ENCODE measurements at regions of chr7 and their contacts with region 1.

Region 1: GRCh38 chr7:17301471-17302456 is 3.3 kb downstream of the AHR start:
- DNase-seq: no peak
- CTCF ChIP-seq: no peak

Region 2: DNA sequence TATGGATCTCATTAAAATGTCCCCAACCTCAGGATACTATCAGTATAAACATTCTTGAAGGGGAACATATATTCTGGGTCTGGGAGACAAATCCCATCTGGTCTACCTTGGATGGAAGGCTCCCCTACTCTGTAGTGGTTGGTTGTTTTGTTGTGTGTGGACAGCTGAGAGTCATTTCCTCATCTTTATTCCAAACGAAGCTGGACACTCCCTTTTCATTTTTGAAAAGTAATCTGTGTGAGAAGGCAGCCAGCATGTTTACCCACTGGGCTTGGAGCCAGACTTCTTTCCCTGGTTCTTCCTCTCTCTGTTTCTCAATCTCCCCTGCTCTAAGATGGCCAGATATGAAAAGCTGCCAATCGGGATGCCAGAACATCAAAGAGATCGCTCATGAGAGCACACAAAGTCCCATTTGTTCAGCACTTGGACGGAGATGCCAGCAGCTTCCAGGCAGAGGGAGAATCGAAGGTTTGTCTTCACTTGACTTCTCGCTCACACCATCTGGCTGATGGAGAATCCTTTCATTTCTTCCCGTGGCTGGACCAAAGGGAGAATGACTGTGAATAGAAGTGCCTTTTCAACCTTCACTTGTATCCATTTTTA is 311.9 kb before region 1 on chr7:
- in situ Hi-C with region 1: loop called (anchors 5 kb)
- DNase-seq: no peak
- CTCF ChIP-seq: no peak

Region 3: DNA sequence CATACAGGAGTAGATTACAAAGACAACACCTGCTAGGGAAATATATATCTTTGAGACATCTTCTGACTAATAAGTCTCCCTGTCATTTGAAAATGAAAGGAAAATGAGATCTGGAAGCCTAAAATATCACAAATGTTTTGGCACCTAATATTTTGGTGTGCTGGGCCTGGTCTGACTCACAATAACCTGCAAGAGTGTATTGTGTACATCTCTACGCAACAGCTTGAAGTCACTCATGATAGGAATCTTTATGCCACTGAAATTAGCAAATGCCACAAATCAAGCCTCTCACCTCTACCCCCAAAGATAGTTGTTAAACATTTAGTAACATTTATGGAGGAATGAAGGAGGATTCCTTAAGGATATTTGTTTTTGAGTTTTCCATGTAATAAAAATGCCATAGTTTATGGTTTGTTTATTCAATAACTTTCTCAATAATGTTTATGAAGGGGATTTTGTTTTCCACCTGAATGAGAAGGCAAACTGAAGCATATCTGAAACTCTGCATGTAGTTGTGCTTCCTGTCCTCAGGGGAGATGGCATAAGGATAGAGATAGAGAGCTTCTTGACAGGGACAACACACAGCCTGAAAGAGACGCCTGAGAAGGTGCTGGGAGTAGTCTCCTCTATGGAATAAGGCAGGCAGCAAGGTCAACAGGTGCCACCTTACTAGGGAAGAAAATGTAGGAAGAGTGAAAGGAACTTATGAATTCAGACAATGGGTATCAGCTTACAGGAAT is 194.1 kb after region 1 on chr7:
- in situ Hi-C with region 1: no loop called
- DNase-seq: no peak
- CTCF ChIP-seq: no peak

Region 4: DNA sequence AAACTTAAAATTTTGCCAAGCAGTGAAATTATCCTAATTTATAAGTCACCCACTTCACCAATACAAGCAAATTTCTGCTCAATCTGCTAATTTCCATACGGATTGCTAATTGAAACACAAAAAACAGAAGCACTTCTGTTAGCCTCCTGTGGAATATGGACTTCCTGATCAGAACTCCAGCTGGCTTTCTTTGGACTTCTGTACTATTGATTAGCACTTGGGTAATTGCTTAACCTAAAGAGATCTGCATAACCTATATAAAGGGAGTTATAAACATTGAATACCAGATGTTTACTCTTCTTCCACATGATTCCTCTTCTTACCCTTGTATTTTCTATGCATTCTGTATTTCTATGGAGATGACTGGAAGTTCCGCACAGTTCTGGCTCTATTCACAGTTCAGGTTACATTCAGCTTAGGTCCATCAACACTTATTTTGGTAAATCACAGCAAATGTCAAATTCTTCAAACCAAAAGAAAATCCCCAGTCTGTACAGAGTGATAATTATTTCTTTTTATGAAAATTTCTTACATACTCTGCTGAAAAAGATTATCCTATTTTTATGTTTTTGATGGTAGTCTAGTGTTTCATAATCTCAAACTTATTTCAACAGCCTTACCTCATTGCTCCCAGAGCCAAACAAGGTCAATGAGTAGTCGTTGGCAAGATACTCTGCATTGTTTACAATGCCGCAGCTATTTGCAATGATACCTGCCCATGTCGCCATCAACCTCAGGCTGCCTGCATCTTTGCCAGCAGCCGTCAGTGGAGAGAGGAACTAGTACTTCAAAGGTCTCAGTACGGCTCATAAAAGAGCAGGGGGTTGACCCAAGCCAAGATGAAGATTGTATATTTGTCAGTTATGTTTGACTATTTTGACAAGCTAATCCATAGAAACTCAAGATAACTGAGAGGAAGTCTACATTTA is 222.3 kb after region 1 on chr7:
- in situ Hi-C with region 1: loop called (anchors 10 kb)
- DNase-seq: no peak
- CTCF ChIP-seq: no peak

Region 5: GRCh38 chr7:17651926-17652385 is 350.2 kb after region 1 on chr7:
- in situ Hi-C with region 1: loop called (anchors 25 kb)
- DNase-seq: no peak
- CTCF ChIP-seq: no peak